ENCODE measurements at regions of chr1 and their contacts with region 1.

Region 1: GRCh38 chr1:235504496-235505222 is 407 bp upstream of the B3GALNT2 start:
- DNase-seq: peak; percentile 98 to 99
- ATAC-seq: peak; percentile 77 to 80
- H3K4me3 ChIP-seq: peak overlapping the region; percentile 74 to 92 (median 86)
- H3K27ac ChIP-seq: peak overlapping the region; percentile 99 to 100 (median 99)
- H3K4me1 ChIP-seq: peaks cover 35 to 38% of the 10 kb centered on the region in 2 donors
- H3K27me3 ChIP-seq: no peaks in the 10 kb centered on the region
- CTCF ChIP-seq: peak; percentile 89 to 94 (median 90)
- POLR2A ChIP-seq: peak; percentile 83

Region 2: DNA sequence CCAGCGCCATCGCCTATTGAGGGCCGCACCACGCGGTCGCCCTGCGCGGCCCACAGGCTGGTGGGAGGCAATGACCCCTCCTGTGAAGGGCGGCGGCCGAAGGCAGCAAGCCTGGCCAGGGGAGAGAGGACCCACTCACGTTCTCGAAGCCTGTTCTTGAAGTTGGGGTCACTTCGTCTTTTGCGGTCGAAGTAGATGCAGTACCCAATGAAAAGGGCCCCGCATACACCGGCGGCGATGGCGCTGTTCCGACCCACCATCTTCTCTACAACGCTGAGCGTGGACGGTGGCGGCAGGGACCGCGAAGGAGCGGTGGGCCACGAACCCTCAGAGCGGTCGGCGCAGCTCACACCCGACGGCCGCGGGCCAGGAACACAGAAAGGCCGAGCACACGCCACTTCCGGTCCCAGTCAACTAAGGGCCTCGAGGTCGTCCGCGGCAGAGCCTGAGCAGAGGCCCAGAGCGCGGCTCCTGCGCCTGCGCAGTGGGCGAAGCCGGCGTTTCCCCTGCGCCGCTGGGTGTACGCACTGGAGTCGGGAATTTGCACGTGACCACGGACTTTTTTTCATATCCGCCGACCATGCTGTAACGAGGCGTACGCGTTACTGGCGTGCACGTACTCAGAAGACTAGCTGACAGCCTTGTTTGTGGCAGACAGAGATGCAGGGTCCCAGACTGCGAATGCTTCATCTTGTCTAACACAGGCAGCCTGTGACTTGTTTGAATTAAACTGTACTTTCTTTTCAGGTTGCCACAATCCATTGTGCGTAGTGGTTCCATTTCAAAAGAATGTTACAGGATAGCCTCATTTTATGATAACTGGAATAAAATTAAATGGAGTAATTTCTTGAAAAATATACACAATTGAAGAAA is 376.0 kb before region 1 on chr1 and contains the start of gene TOMM20:
- in situ Hi-C with region 1: no loop called
- intact Hi-C with region 1: loop called (anchors 5 kb)
- DNase-seq: peak; percentile 93 to 98
- ATAC-seq: peak; percentile 97
- H3K4me3 ChIP-seq: peak within 1 kb of the TSS; percentile 90 to 95 (median 94)
- H3K27ac ChIP-seq: peak within 1 kb of the TSS; percentile 86 to 92 (median 88)
- H3K4me1 ChIP-seq: peaks cover 15 to 18% of the 10 kb centered on the region in 2 donors
- H3K27me3 ChIP-seq: no peaks in the 10 kb centered on the region
- CTCF ChIP-seq: peak in 1 of 5 experiments; percentile 10
- POLR2A ChIP-seq: peak; percentile 61 to 72
- total RNA-seq, gene TOMM20: 51.7 to 71.8 (median 62.3) TPM

Region 3: DNA sequence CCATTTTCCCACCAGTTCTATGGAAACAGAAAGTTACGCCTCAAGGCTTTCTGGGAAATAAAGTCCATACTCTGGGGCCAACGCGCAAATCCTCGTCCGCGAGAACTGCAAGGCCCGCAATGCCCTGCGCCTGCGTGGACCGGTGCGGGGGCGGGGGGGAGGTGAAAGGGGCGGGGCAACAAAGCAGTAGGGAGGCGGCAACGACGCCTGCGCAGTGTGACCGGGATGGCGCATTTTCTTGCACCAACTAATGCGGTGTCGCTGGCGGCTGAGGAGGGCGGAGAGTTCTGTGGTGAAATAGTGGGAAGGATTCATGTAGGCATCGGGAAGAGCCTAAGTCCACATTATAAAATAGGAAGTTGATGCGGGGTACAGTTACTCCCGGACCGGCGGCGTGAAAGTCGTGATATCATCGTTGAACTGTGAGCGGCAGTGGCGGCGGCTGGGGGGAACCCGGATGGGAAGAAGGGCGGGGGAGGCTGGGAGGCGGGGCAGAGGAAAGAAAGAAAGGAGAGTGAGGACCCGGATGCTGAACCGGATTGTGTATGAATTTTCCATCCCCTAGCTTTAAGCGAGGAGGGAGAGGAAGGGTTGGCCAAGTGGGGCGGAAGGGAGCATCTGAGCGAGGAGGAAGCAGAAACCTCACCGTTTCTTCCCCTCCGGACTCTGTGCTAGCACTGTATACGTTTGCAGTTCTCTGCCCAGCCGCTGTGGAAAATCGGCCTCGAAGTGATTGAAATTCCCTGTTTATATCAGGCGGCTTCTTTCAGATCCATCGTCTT is 176.1 kb before region 1 on chr1 and contains the start of gene GGPS1:
- in situ Hi-C with region 1: no loop called
- intact Hi-C with region 1: loop called (anchors 2 kb)
- DNase-seq: peak; percentile 97 to 99
- ATAC-seq: peak; percentile 73 to 75
- H3K4me3 ChIP-seq: peak within 1 kb of the TSS; percentile 88 to 98 (median 95)
- H3K27ac ChIP-seq: peak within 1 kb of the TSS; percentile 94 to 98 (median 96)
- H3K4me1 ChIP-seq: peaks cover 57 to 61% of the 10 kb centered on the region in 2 donors
- H3K27me3 ChIP-seq: no peaks in the 10 kb centered on the region
- CTCF ChIP-seq: peak in 2 of 5 experiments; percentile 22 to 34
- POLR2A ChIP-seq: peak; percentile 74 to 81
- total RNA-seq, gene GGPS1: 14.5 to 21.9 (median 17.7) TPM

Region 4: DNA sequence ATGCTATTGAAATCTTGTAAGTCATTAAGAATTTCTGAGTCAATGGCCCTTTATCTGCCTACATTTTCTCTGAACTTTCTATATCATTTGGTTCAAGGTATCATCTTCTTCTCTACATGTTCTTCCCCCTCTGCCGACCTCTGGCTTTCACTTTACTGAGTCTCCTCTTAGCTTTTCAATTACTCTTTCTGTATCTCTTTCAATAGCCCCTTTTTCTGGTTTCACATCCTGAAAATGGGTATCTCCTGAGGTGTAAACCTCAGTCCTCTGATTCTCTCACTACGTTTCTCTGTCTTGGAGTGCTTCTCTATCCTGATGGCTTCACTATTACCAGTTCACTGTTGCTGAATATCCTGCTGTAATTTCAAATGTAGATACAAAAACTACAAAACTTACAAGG is 263.1 kb after region 1 on chr1:
- in situ Hi-C with region 1: loop called in 1 of 4 experiments (anchors 25 kb)
- intact Hi-C with region 1: no loop called
- DNase-seq: no peak
- ATAC-seq: no peak
- H3K4me3 ChIP-seq: no peak overlapping the region
- H3K27ac ChIP-seq: no peak overlapping the region
- H3K4me1 ChIP-seq: no peaks in the 10 kb centered on the region
- H3K27me3 ChIP-seq: no peaks in the 10 kb centered on the region
- CTCF ChIP-seq: no peak
- POLR2A ChIP-seq: no peak

Region 5: GRCh38 chr1:236064674-236065508 is 560.2 kb after region 1 on chr1 and contains the start of gene NID1:
- in situ Hi-C with region 1: no loop called
- intact Hi-C with region 1: loop called (anchors 10 kb)
- DNase-seq: peak; percentile 58 to 78
- ATAC-seq: peak; percentile 64 to 70
- H3K4me3 ChIP-seq: peak within 1 kb of the TSS; percentile 57 to 74 (median 68)
- H3K27ac ChIP-seq: peak within 1 kb of the TSS; percentile 72 to 86 (median 86)
- H3K4me1 ChIP-seq: no peaks in the 10 kb centered on the region
- H3K27me3 ChIP-seq: peaks cover 16 to 33% (median 18%) of the 10 kb centered on the region in 3 donors
- CTCF ChIP-seq: peak in 4 of 5 experiments; percentile 26 to 36 (median 30)
- POLR2A ChIP-seq: peak; percentile 64 to 85
- total RNA-seq, gene NID1: 33.7 to 79.0 (median 51.7) TPM

Region 6: GRCh38 chr1:236603991-236604904 is 1099.6 kb after region 1 on chr1 and contains the start of gene HEATR1:
- in situ Hi-C with region 1: no loop called
- intact Hi-C with region 1: loop called (anchors 10 kb)
- DNase-seq: peak; percentile 92 to 93
- ATAC-seq: peak; percentile 96 to 97
- H3K4me3 ChIP-seq: peak within 1 kb of the TSS; percentile 75 to 88 (median 86)
- H3K27ac ChIP-seq: peak within 1 kb of the TSS; percentile 87 to 94 (median 89)
- H3K4me1 ChIP-seq: peaks cover 10 to 16% of the 10 kb centered on the region in 2 donors
- H3K27me3 ChIP-seq: no peaks in the 10 kb centered on the region
- CTCF ChIP-seq: peak in 1 of 5 experiments; percentile 9
- POLR2A ChIP-seq: peak; percentile 57 to 58
- total RNA-seq, gene HEATR1: 11.6 to 17.5 (median 15.8) TPM